B cell (primary cell): ENCODE measurements at regions of chr13 and their contacts with region 1.

Region 1: GRCh38 chr13:98509271-98510155 is 67.4 kb downstream of the STK24 start:
- DNase-seq: peak; percentile 81
- ATAC-seq: peak; percentile 81
- H3K4me3 ChIP-seq: peak overlapping the region in 3 of 5 experiments; percentile 2 to 49 (median 18)
- H3K4me3 Mint-ChIP-seq: peak overlapping the region; percentile 69
- H3K27ac ChIP-seq: peak overlapping the region; percentile 80 to 94
- H3K27ac Mint-ChIP-seq: peak overlapping the region; percentile 97
- H3K4me1 ChIP-seq: peaks cover 80 to 94% of the 10 kb centered on the region in 2 donors
- H3K4me1 Mint-ChIP-seq: peaks cover 98% of the 10 kb centered on the region
- H3K27me3 ChIP-seq: no peaks in the 10 kb centered on the region
- H3K27me3 Mint-ChIP-seq: no peaks in the 10 kb centered on the region
- CTCF ChIP-seq: no peak

Region 2: GRCh38 chr13:98476538-98476966 is 33.0 kb before region 1 on chr13:
- CTCF ChIA-PET with region 1: interaction called, 3 read pairs
- POLR2A ChIA-PET with region 1: interaction called, 3 read pairs
- intact Hi-C with region 1: loop called (anchors 2 kb)
- DNase-seq: peak; percentile 71
- ATAC-seq: peak; percentile 94
- H3K4me3 ChIP-seq: peak overlapping the region in 2 of 5 experiments; percentile 0 to 2
- H3K4me3 Mint-ChIP-seq: peak overlapping the region; percentile 76
- H3K27ac ChIP-seq: peak overlapping the region; percentile 33 to 76
- H3K27ac Mint-ChIP-seq: peak overlapping the region; percentile 85
- H3K4me1 ChIP-seq: peaks cover 38 to 42% of the 10 kb centered on the region in 2 donors
- H3K4me1 Mint-ChIP-seq: peaks cover 45% of the 10 kb centered on the region
- H3K27me3 ChIP-seq: no peaks in the 10 kb centered on the region
- H3K27me3 Mint-ChIP-seq: no peaks in the 10 kb centered on the region
- CTCF ChIP-seq: no peak

Region 3: GRCh38 chr13:98542568-98543377 is 33.3 kb after region 1 on chr13:
- CTCF ChIA-PET with region 1: interaction called, 3 read pairs
- POLR2A ChIA-PET with region 1: no interaction called
- intact Hi-C with region 1: loop called (anchors 5 kb)
- DNase-seq: peak; percentile 46
- ATAC-seq: peak; percentile 50
- H3K4me3 ChIP-seq: peak overlapping the region; percentile 1 to 58 (median 27)
- H3K4me3 Mint-ChIP-seq: peak overlapping the region; percentile 81
- H3K27ac ChIP-seq: peak overlapping the region; percentile 25 to 55
- H3K27ac Mint-ChIP-seq: peak overlapping the region; percentile 73
- H3K4me1 ChIP-seq: peaks cover 42 to 44% of the 10 kb centered on the region in 2 donors
- H3K4me1 Mint-ChIP-seq: peaks cover 87% of the 10 kb centered on the region
- H3K27me3 ChIP-seq: no peaks in the 10 kb centered on the region
- H3K27me3 Mint-ChIP-seq: no peaks in the 10 kb centered on the region
- CTCF ChIP-seq: no peak

Region 4: GRCh38 chr13:98570929-98571372 is 61.4 kb after region 1 on chr13:
- CTCF ChIA-PET with region 1: interaction called, 6 read pairs
- POLR2A ChIA-PET with region 1: interaction called, 7 read pairs
- intact Hi-C with region 1: loop called (anchors 1 kb)
- DNase-seq: peak; percentile 80
- ATAC-seq: peak; percentile 88
- H3K4me3 ChIP-seq: peak overlapping the region; percentile 41 to 73 (median 43)
- H3K4me3 Mint-ChIP-seq: peak overlapping the region; percentile 91
- H3K27ac ChIP-seq: peak overlapping the region; percentile 78
- H3K27ac Mint-ChIP-seq: peak overlapping the region; percentile 95
- H3K4me1 ChIP-seq: peaks cover 85 to 90% of the 10 kb centered on the region in 2 donors
- H3K4me1 Mint-ChIP-seq: peaks cover 93% of the 10 kb centered on the region
- H3K27me3 ChIP-seq: no peaks in the 10 kb centered on the region
- H3K27me3 Mint-ChIP-seq: no peaks in the 10 kb centered on the region
- CTCF ChIP-seq: no peak